ENCODE measurements at regions of chr12 and their contacts with region 1.

Region 1: DNA sequence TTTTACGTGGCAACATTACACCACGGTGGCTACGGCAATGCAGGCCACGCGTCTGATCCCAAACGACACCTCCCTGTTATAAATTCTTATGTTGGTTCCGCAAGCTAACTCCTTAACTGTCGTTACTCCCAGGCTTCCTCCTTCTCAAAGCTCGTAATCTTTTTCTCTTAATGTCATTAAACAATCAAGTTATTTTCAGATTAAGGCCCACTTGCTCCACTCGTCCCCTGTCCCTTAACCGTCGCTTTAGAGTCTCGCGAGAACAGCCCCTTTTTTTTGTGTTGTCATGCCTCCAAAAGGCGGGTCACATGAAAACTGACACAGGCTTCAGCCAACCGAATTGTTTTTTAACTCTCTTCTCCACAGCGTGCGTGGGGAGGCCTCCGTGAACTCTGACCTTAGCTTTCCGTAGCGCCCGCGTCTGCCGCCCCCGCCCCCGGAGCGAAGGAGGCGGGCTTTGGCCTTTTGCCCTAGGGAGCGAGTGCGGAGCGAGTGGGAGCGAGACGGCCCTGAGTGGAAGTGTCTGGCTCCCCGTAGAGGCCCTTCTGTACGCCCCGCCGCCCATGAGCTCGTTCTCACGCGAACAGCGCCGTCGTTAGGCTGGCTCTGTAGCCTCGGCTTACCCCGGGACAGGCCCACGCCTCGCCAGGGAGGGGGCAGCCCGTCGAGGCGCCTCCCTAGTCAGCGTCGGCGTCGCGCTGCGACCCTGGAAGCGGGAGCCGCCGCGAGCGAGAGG is at the start of gene CAND1:
- DNase-seq: peak; percentile 95
- ATAC-seq: peak; percentile 79
- H3K4me3 Mint-ChIP-seq: peak within 1 kb of the TSS; percentile 92
- H3K27ac Mint-ChIP-seq: peak within 1 kb of the TSS; percentile 99
- H3K4me1 Mint-ChIP-seq: peaks cover 44% of the 10 kb centered on the region
- H3K27me3 Mint-ChIP-seq: no peaks in the 10 kb centered on the region
- CTCF ChIP-seq: no peak
- total RNA-seq, gene CAND1: 123 and 125 TPM in 2 replicates

Region 2: DNA sequence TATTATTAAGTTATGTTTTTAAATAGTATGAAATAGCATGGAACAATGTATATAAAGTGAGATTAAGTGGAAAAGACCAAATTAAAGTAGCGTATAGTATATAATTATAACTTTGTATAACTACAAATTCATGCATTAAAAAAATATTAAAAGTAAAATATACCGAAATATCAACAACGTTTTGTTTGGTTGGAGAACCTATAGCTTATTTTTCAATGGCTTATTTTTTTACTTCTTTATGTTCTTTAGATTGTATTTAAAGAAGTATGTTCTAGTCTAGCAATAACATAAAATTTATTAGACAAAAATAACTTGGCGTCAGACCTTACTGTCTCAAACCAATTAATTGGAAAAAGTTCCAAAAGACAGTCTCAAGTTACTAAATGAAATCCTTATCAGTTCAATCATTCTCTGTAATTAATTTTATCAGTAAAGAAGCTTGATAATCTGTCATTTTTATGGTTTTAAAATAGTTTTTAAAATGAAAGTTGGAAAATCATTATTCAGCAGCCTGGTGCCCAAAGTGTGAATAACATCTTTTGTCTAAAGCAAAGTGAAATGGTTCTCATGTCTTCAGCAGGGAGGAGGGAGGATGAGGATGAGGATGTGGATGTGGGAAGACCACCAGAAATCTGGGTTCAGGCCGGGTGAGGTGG is 1033.3 kb before region 1 on chr12:
- CTCF ChIA-PET with region 1: no interaction called
- POLR2A ChIA-PET with region 1: no interaction called
- intact Hi-C with region 1: loop called (anchors 1 kb)
- DNase-seq: no peak
- ATAC-seq: no peak
- H3K4me3 Mint-ChIP-seq: peak overlapping the region; percentile 70
- H3K27ac Mint-ChIP-seq: no peak overlapping the region
- H3K4me1 Mint-ChIP-seq: peaks cover 31% of the 10 kb centered on the region
- H3K27me3 Mint-ChIP-seq: peaks cover under 1% of the 10 kb centered on the region
- CTCF ChIP-seq: no peak

Region 3: GRCh38 chr12:67222302-67222701 is 46.8 kb before region 1 on chr12:
- CTCF ChIA-PET with region 1: no interaction called
- POLR2A ChIA-PET with region 1: no interaction called
- intact Hi-C with region 1: no loop called
- DNase-seq: no peak
- ATAC-seq: no peak
- H3K4me3 Mint-ChIP-seq: no peak overlapping the region
- H3K27ac Mint-ChIP-seq: no peak overlapping the region
- H3K4me1 Mint-ChIP-seq: peaks cover 8% of the 10 kb centered on the region
- H3K27me3 Mint-ChIP-seq: no peaks in the 10 kb centered on the region
- CTCF ChIP-seq: no peak

Region 4: GRCh38 chr12:67355578-67356379 is 86.7 kb after region 1 on chr12:
- CTCF ChIA-PET with region 1: no interaction called
- POLR2A ChIA-PET with region 1: interaction called, 12 read pairs
- intact Hi-C with region 1: no loop called
- DNase-seq: no peak
- ATAC-seq: peak; percentile 54
- H3K4me3 Mint-ChIP-seq: no peak overlapping the region
- H3K27ac Mint-ChIP-seq: no peak overlapping the region
- H3K4me1 Mint-ChIP-seq: peaks cover 5% of the 10 kb centered on the region
- H3K27me3 Mint-ChIP-seq: no peaks in the 10 kb centered on the region
- CTCF ChIP-seq: no peak

Region 5: GRCh38 chr12:67648521-67649260 is 379.6 kb after region 1 on chr12 and contains the start of gene DYRK2:
- CTCF ChIA-PET with region 1: no interaction called
- POLR2A ChIA-PET with region 1: interaction called, 10 read pairs
- intact Hi-C with region 1: loop called (anchors 1 kb)
- DNase-seq: peak; percentile 78
- ATAC-seq: peak; percentile 64
- H3K4me3 Mint-ChIP-seq: peak within 1 kb of the TSS; percentile 97
- H3K27ac Mint-ChIP-seq: peak within 1 kb of the TSS; percentile 87
- H3K4me1 Mint-ChIP-seq: peaks cover 33% of the 10 kb centered on the region
- H3K27me3 Mint-ChIP-seq: no peaks in the 10 kb centered on the region
- CTCF ChIP-seq: no peak
- total RNA-seq, gene DYRK2: 37.6 and 40.3 TPM in 2 replicates

Region 6: GRCh38 chr12:68331869-68332727 is 1063.0 kb after region 1 on chr12 and contains the start of gene MDM1:
- CTCF ChIA-PET with region 1: no interaction called
- POLR2A ChIA-PET with region 1: interaction called, 4 read pairs
- intact Hi-C with region 1: loop called (anchors 2 kb)
- DNase-seq: peak; percentile 92
- ATAC-seq: peak; percentile 97
- H3K4me3 Mint-ChIP-seq: peak within 1 kb of the TSS; percentile 89
- H3K27ac Mint-ChIP-seq: peak within 1 kb of the TSS; percentile 87
- H3K4me1 Mint-ChIP-seq: peaks cover 27% of the 10 kb centered on the region
- H3K27me3 Mint-ChIP-seq: no peaks in the 10 kb centered on the region
- CTCF ChIP-seq: no peak
- total RNA-seq, gene MDM1: 24.5 and 25.9 TPM in 2 replicates

Region 7: DNA sequence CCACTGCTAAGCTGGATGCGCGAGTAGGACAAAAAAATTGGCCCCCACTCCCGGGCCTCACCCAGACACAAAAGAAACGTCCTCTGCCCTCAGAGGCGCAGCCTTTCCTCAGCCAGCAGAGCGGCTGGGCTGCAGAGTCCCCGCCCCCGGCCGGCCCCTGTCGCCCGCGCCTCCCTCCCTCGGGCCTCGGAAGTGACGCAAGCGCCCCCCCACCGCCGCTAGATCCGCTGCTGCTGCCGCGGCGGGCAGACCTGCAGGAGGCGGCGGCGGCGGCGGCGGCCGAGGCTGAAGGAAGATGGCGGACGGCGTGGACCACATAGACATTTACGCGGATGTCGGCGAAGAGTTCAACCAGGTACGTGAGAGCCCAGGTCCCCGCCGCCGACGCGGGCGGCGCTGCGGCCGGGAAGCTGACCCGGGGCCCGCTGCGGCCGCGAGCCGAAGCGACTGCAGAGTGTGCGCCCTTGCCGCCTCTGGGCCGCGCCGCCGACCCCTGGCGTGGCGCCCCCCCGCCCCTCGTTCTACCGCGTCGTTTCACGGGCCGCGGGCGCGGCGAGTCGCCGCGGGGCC is 1970.4 kb after region 1 on chr12 and contains the start of gene CPSF6:
- CTCF ChIA-PET with region 1: no interaction called
- POLR2A ChIA-PET with region 1: no interaction called
- intact Hi-C with region 1: loop called (anchors 5 kb)
- DNase-seq: peak; percentile 96
- ATAC-seq: peak; percentile 93
- H3K4me3 Mint-ChIP-seq: peak within 1 kb of the TSS; percentile 99
- H3K27ac Mint-ChIP-seq: peak within 1 kb of the TSS; percentile 96
- H3K4me1 Mint-ChIP-seq: peaks cover 51% of the 10 kb centered on the region
- H3K27me3 Mint-ChIP-seq: no peaks in the 10 kb centered on the region
- CTCF ChIP-seq: no peak
- total RNA-seq, gene CPSF6: 95.5 and 104 TPM in 2 replicates